Endothelial cell of umbilical vein (primary cell): ENCODE measurements at regions of chr15 and their contacts with region 1.

Region 1: GRCh38 chr15:39511000-39511915 is 69.6 kb upstream of the THBS1 start:
- DNase-seq: peak; percentile 72
- H3K4me3 ChIP-seq: no peak overlapping the region
- H3K27ac ChIP-seq: no peak overlapping the region
- H3K4me1 ChIP-seq: peaks cover 5% of the 10 kb centered on the region
- H3K27me3 ChIP-seq: no peaks in the 10 kb centered on the region
- CTCF ChIP-seq: no peak
- POLR2A ChIP-seq: no peak

Region 2: DNA sequence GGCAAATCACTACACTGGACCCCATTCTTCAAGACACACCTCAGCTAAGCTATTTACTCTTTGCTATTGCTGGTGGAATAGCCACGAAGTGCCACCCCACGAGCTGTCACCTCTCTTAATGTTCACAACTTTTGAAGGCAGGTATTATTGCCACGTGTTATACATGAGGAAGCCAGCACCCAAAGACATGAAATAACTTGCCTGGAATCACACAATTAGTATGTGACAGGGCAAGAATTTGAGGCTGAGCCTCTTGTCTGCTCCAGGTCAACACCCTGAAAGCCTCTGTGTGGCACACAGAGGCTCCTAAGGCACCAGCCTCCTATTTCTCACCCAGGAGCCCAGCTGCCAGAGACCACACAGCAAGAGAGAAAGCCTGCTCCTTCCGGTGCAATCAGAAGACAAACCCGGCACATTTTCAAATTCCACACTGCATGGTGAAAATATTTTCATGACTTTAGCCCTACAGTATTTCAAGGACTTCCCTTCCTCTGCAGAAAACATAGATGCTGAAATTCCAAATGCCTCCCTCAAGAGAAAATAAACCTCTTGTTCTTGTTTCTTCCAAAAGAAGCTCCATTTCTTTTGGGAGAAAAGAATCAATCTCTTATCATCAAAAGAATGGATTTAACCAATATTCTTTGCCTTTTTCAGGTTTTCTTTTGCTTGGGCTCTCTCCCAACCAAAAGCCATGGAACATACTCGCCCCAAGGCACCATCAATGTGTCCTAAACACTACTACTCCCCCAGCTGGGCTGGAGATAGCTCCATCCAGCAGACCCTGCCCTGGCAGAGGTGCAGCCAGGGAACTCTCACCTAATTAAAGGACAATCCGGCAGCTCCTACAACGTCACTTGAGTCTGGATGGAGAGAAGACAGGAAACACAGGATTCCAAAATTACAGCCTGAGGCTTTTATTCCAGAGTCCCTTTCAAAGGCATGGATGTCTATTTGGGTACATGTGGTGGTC is 15.1 kb before region 1 on chr15:
- CTCF ChIA-PET with region 1: interaction called, 12 read pairs
- POLR2A ChIA-PET with region 1: no interaction called
- dilution Hi-C with region 1: no loop called
- intact Hi-C with region 1: no loop called
- DNase-seq: no peak
- H3K4me3 ChIP-seq: no peak overlapping the region
- H3K27ac ChIP-seq: no peak overlapping the region
- H3K4me1 ChIP-seq: no peaks in the 10 kb centered on the region
- H3K27me3 ChIP-seq: no peaks in the 10 kb centered on the region
- CTCF ChIP-seq: no peak
- POLR2A ChIP-seq: no peak

Region 3: DNA sequence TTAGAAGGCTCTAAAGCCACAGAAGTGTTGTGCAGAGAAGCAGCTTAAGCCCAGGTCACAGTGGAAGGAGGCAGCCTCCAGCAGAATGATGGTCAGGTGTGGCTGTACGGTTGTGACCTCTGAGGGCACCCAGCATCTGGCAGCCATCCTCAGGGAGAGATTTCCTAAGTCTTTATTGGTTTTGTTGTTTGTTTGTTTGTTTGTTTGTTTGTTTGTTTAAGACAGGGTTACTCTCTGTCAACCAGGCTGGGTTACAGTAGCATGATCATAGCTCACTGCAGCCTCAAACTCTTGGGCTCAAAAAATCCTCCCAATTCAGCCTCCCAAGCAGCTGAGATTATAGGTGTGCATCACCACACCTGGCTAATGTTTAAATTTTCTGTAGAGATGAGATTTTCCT is 14.9 kb after region 1 on chr15:
- CTCF ChIA-PET with region 1: interaction called, 10 read pairs
- POLR2A ChIA-PET with region 1: no interaction called
- dilution Hi-C with region 1: no loop called
- intact Hi-C with region 1: no loop called
- DNase-seq: no peak
- H3K4me3 ChIP-seq: no peak overlapping the region
- H3K27ac ChIP-seq: no peak overlapping the region
- H3K4me1 ChIP-seq: no peaks in the 10 kb centered on the region
- H3K27me3 ChIP-seq: no peaks in the 10 kb centered on the region
- CTCF ChIP-seq: no peak
- POLR2A ChIP-seq: no peak